ENCODE measurements at regions of chr1 and their contacts with region 1.

Region 1: GRCh38 chr1:240092301-240093119 is 827 bp downstream of the FMN2 start:
- DNase-seq: peak; percentile 60
- ATAC-seq: peak; percentile 42
- H3K4me3 ChIP-seq: peak overlapping the region; percentile 92
- H3K27ac ChIP-seq: no peak overlapping the region
- H3K4me1 ChIP-seq: peaks cover 64% of the 10 kb centered on the region
- H3K27me3 ChIP-seq: no peaks in the 10 kb centered on the region
- CTCF ChIP-seq: peak; percentile 61

Region 2: DNA sequence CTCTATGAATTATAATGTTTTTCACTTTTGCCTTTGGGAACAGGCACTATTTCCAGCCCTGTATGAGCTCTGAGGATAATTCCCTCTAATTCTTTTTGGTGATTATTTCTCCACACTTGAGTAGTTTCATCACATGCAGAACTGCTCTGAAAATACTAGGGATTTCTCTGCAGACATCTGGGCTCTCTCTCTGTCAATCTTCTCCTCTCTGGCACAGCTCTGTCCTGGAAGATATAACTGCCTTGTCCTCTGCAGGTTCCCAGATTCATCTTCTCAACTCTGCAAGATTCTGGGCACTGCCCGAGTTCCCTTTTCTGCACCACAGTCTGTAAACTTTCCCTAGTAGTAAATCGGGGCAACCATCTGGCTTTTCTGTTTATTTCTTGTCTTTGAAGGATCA is 132.1 kb before region 1 on chr1:
- CTCF ChIA-PET with region 1: no interaction called
- POLR2A ChIA-PET with region 1: no interaction called
- intact Hi-C with region 1: no loop called
- DNase-seq: no peak
- ATAC-seq: no peak
- H3K4me3 ChIP-seq: no peak overlapping the region
- H3K27ac ChIP-seq: no peak overlapping the region
- H3K4me1 ChIP-seq: no peaks in the 10 kb centered on the region
- H3K27me3 ChIP-seq: peaks cover 45% of the 10 kb centered on the region
- CTCF ChIP-seq: no peak

Region 3: DNA sequence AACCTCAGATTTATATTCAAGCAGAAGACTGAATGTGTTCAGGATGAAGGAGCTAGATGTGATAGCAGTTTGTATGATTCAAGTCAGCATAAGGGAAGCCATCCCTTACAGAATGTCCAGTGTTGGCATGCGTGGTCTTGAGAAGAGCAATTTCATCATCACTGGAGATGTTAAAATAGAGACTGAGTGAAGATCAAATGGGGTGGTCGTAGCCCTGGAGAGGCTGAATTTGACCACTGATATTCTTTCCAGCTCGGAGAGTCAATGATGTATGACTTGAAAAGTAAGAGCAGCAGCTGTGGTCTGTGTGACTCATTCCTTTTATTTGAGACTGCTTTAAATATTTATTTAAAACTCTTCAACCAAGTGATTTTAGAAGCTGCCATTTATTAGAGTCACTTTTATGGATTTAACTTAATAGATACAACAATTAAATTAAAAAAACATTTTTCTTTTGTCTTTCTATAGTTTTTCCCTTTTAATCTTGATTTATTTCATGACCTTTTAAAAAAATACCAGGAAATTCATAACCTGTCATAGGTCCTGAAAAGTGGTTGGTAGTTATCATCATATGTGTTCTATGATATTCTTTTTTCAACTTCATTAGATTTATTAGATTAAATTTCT is 14.7 kb after region 1 on chr1:
- CTCF ChIA-PET with region 1: no interaction called
- POLR2A ChIA-PET with region 1: interaction called, 20 read pairs
- intact Hi-C with region 1: loop called (anchors 2 kb)
- DNase-seq: peak; percentile 74
- ATAC-seq: peak; percentile 64
- H3K4me3 ChIP-seq: no peak overlapping the region
- H3K27ac ChIP-seq: no peak overlapping the region
- H3K4me1 ChIP-seq: peaks cover 38% of the 10 kb centered on the region
- H3K27me3 ChIP-seq: no peaks in the 10 kb centered on the region
- CTCF ChIP-seq: no peak

Region 4: GRCh38 chr1:240149484-240150094 is 57.1 kb after region 1 on chr1:
- CTCF ChIA-PET with region 1: no interaction called
- POLR2A ChIA-PET with region 1: no interaction called
- intact Hi-C with region 1: loop called (anchors 2 kb)
- DNase-seq: peak; percentile 82
- ATAC-seq: peak; percentile 75
- H3K4me3 ChIP-seq: no peak overlapping the region
- H3K27ac ChIP-seq: no peak overlapping the region
- H3K4me1 ChIP-seq: peaks cover 9% of the 10 kb centered on the region
- H3K27me3 ChIP-seq: no peaks in the 10 kb centered on the region
- CTCF ChIP-seq: peak; percentile 91